MCF 10A (cell line): ENCODE measurements at regions of chr14 and their contacts with region 1.

Region 1: GRCh38 chr14:99415496-99416281 is 65.0 kb downstream of the SETD3 start:
- DNase-seq: peak; percentile 88
- H3K4me3 Mint-ChIP-seq: no peak overlapping the region
- H3K27ac Mint-ChIP-seq: no peak overlapping the region
- H3K4me1 Mint-ChIP-seq: peaks cover 4% of the 10 kb centered on the region
- H3K27me3 Mint-ChIP-seq: no peaks in the 10 kb centered on the region
- CTCF ChIP-seq: peak; percentile 66

Region 2: DNA sequence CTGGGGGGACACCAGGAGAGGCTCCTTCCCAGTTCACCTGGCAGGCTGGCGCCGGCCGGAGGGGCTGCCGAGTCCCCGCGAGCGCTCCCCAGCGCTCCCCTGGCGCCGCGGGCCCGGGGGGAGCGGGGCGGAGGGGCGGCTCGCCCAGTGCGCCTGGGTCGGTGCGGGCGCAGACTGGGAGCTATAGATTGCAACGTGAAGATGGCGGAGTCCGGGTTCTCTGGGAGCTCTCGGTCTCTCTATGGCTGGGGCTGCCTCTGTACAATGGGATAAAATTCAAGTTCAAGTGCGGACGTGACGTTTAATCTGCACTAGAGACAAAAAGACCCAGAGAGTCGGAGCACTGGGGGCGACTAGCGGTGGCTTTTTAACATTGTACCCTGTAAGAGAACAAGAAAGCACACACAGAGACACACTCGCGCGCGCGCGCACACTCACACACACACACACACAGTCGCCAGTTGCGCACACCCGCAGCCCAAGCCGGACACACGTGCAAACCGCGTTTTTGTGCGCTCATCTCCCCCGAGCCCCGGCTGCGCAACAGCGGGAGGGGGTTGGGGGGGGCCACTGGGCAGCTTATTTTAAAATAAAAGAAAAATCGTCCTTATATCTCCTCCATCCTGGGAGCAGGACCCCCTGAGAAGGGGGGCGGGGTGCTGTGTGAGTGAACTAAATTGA is 143.6 kb before region 1 on chr14 and contains the start of gene BCL11B:
- CTCF ChIA-PET with region 1: interaction called, 4 read pairs
- POLR2A ChIA-PET with region 1: interaction called, 3 read pairs
- intact Hi-C with region 1: loop called (anchors 1 kb)
- DNase-seq: peak; percentile 86
- H3K4me3 Mint-ChIP-seq: peak within 1 kb of the TSS; percentile 72
- H3K27ac Mint-ChIP-seq: peak within 1 kb of the TSS; percentile 36
- H3K4me1 Mint-ChIP-seq: peaks cover 14% of the 10 kb centered on the region
- H3K27me3 Mint-ChIP-seq: peaks cover 19% of the 10 kb centered on the region
- CTCF ChIP-seq: peak; percentile 50
- total RNA-seq, gene BCL11B: 0.84 and 1.4 TPM in 2 replicates

Region 3: GRCh38 chr14:99320105-99320572 is 95.5 kb before region 1 on chr14:
- CTCF ChIA-PET with region 1: interaction called, 19 read pairs
- POLR2A ChIA-PET with region 1: no interaction called
- intact Hi-C with region 1: loop called (anchors 1 kb)
- DNase-seq: peak; percentile 65
- H3K4me3 Mint-ChIP-seq: no peak overlapping the region
- H3K27ac Mint-ChIP-seq: no peak overlapping the region
- H3K4me1 Mint-ChIP-seq: peaks cover 6% of the 10 kb centered on the region
- H3K27me3 Mint-ChIP-seq: no peaks in the 10 kb centered on the region
- CTCF ChIP-seq: peak; percentile 89

Region 4: GRCh38 chr14:99393047-99393655 is 22.5 kb before region 1 on chr14:
- CTCF ChIA-PET with region 1: interaction called, 18 read pairs
- POLR2A ChIA-PET with region 1: interaction called, 3 read pairs
- intact Hi-C with region 1: loop called (anchors 1 kb)
- DNase-seq: peak; percentile 54
- H3K4me3 Mint-ChIP-seq: no peak overlapping the region
- H3K27ac Mint-ChIP-seq: no peak overlapping the region
- H3K4me1 Mint-ChIP-seq: no peaks in the 10 kb centered on the region
- H3K27me3 Mint-ChIP-seq: no peaks in the 10 kb centered on the region
- CTCF ChIP-seq: peak; percentile 59

Region 5: DNA sequence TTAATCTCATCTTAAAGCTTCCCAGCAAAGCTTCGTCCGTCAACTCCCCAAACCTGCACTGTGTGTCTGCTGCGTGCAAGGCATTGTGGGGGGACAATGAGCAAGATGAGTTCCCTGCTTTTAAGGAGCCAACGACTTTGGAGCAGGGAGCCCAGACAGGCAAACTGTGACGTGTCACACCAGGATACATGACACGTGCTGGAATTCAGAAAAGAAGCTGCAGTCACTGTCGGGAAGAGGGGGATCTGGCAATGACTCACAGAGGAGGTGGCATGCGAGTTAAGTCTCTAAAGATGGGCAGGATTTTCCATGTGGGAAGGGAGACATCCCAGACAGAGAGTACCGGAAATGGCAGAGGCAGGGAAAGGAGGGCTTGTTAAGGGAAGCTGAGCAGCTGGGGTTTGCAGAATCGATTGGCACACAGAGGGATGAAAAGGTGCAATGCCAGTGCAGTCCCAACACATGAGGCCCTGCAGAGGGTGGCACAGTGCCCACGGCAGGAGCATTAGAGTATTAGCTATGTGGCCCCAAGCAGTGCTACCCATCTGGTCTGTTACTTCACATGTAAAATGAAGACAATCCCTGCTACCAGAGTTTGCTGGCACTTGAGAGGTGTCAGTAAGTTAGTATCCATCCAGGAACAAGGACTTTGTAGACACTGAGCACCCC is 12.1 kb after region 1 on chr14:
- CTCF ChIA-PET with region 1: interaction called, 14 read pairs
- POLR2A ChIA-PET with region 1: interaction called, 4 read pairs
- intact Hi-C with region 1: no loop called
- DNase-seq: peak; percentile 9
- H3K4me3 Mint-ChIP-seq: no peak overlapping the region
- H3K27ac Mint-ChIP-seq: no peak overlapping the region
- H3K4me1 Mint-ChIP-seq: no peaks in the 10 kb centered on the region
- H3K27me3 Mint-ChIP-seq: no peaks in the 10 kb centered on the region
- CTCF ChIP-seq: no peak